ENCODE measurements at regions of chr20 and their contacts with region 1.

Region 1: DNA sequence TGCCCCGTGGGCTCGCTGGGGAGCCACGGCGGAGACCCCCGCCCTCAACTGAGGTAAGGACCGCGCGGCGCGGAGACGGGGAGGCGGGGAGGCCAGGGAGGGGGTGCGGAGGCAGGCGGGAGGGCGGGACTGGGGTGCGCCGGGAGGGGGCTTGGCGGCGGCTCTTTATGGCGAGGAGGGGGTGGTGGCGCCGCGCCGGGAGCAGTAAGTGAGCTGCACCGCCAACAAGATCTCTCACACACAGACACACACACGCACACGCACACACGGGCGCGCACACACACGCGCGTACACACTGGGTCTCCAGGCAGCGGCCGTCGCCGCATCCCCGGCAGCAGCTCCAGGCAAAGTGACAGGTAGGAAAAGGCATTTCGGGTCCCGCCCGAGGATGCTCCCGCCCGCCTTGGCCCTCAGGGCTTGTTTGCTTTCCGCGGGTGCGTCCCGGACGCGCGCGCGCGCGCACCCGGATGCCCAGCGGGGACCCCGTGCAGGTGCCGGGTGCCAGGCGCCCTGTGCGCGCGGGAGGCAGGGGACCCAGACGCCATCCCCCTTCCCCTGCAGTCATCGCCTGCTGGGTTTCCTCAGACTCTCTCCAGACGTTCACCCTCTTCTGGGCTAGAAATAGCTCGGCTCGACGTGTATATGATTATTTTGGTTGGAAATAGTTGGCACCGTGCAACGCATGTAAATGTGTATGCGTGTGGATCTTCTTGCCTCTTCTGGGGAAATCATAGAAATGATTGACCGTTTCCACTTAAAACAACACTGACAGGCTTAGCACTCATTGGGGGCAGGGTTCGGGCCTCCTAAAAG is at the start of gene PLCB4:
- DNase-seq: peak in 1 of 2 donors; percentile 68
- H3K4me3 ChIP-seq: peak within 1 kb of the TSS; percentile 67 to 83
- H3K27ac ChIP-seq: peak within 1 kb of the TSS; percentile 85 to 86
- H3K4me1 ChIP-seq: peaks cover 0 to 2% of the 10 kb centered on the region in 2 donors
- H3K27me3 ChIP-seq: no peaks in the 10 kb centered on the region
- CTCF ChIP-seq: no peak
- total RNA-seq, gene PLCB4: 38.0 TPM

Region 2: DNA sequence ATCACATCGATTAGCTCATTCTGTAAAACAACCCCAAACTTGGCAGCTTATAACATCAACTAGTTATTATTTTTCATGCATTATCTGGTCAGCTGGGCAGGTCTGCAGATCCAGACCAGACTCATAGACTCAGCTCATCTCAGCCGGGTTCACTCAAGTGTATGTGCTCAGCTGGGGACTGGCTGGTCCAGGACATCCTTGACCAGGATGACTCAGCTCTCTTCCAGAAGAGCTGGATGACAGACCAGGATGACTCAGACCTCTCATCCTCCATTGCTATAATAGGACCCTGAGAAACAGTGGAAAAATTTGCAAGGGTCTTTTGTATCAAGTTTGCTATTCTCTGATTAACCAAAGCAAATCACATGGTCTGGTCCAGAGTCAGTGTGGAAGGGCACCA is 312.6 kb before region 1 on chr20:
- intact Hi-C with region 1: loop called (anchors 10 kb)
- DNase-seq: no peak
- H3K4me3 ChIP-seq: no peak overlapping the region
- H3K27ac ChIP-seq: no peak overlapping the region
- H3K4me1 ChIP-seq: no peaks in the 10 kb centered on the region
- H3K27me3 ChIP-seq: no peaks in the 10 kb centered on the region
- CTCF ChIP-seq: no peak

Region 3: DNA sequence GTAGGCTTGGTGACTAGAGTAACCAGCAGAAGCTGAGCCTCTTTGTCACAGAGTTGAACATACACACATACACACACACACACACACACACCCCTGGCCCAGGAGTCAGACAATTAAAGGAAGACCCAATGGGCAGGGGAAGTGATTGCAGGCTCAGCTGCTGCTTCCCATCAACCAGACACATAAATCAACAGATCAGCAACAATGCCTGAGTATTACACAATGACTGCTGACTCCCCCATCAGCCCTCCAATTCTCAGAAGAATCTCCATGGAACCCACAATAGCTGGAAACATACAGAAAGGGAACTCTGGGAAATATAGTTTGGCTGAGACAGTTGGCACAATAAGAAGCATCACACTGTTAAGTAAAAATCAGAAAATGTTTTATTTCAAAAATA is 270.6 kb before region 1 on chr20:
- intact Hi-C with region 1: no loop called
- DNase-seq: no peak
- H3K4me3 ChIP-seq: no peak overlapping the region
- H3K27ac ChIP-seq: no peak overlapping the region
- H3K4me1 ChIP-seq: no peaks in the 10 kb centered on the region
- H3K27me3 ChIP-seq: no peaks in the 10 kb centered on the region
- CTCF ChIP-seq: no peak

Region 4: DNA sequence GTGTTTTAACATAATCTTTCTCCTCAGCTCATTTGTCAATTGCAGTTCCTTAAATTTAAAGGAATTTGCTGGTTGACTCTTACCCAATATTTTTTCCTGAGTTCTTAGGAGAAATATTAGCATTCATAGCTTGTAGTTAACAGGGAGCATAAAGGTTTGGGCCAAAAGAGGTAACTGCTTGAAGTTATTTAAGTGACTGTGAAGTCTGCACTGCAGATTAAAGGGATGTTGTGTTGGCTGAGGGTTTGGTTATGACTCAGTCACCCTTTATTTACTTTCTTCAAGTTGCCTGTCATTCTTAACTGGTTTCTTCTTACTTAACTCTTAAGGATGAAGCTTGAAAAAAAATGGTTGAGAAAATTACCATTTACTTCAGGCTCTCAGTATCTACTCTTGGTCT is 225.0 kb after region 1 on chr20:
- intact Hi-C with region 1: no loop called
- DNase-seq: no peak
- H3K4me3 ChIP-seq: no peak overlapping the region
- H3K27ac ChIP-seq: no peak overlapping the region
- H3K4me1 ChIP-seq: no peaks in the 10 kb centered on the region
- H3K27me3 ChIP-seq: no peaks in the 10 kb centered on the region
- CTCF ChIP-seq: no peak

Region 5: DNA sequence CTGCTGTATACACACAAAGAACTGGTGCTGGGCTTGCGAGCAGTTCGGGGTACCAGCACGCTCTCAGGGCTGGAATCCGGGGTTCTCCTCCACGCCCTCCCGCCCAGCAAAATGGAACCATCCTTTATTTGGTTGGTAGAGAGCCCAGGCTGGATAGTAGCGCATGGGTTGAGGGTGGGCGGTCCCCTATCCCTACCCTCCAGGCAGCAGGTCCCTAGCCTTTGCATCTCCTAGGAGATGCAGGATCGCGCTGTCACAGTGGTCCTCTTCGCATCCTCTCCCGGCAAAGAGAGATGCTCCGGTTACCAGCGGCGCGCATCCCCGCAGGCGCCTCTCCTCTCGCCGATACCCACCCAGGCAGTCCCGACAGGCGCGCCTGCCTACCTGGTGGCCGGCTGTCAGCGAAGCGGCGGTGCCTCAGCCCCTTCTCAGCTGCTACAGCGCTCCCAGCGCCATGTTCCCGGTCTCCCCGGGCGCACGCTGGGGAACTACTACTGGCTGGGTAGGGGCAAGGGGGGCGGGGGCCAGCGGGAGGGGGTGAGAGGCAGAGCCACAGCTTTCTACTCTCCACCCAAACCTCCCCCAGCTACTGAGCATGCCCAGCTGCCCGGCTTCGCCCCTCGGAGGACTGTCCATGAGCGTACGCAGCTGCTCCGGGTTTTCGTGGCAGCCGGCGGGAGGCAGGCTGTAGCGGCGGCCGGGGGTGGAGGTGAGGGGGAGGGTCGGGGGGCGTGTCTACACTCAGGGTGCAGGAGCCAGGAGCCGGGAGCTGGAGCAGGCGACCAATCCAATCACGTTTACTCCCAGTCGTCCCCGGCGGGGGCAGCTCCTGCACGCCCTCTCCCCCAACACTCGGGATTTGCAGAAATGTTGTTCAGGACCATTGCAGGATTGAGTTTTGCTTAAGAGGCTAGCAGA is 769.6 kb after region 1 on chr20 and contains the start of gene PAK5:
- intact Hi-C with region 1: loop called (anchors 10 kb)
- DNase-seq: peak in 1 of 2 donors; percentile 78
- H3K4me3 ChIP-seq: peak within 1 kb of the TSS; percentile 53 to 75
- H3K27ac ChIP-seq: no peak within 1 kb of the TSS
- H3K4me1 ChIP-seq: no peaks in the 10 kb centered on the region
- H3K27me3 ChIP-seq: no peaks in the 10 kb centered on the region
- CTCF ChIP-seq: no peak
- total RNA-seq, gene PAK5: not detected

Measured in ascending aorta (tissue), 2 donors.